GM12878 (cell line): ENCODE measurements at regions of chr16 and their contacts with region 1.

Region 1: DNA sequence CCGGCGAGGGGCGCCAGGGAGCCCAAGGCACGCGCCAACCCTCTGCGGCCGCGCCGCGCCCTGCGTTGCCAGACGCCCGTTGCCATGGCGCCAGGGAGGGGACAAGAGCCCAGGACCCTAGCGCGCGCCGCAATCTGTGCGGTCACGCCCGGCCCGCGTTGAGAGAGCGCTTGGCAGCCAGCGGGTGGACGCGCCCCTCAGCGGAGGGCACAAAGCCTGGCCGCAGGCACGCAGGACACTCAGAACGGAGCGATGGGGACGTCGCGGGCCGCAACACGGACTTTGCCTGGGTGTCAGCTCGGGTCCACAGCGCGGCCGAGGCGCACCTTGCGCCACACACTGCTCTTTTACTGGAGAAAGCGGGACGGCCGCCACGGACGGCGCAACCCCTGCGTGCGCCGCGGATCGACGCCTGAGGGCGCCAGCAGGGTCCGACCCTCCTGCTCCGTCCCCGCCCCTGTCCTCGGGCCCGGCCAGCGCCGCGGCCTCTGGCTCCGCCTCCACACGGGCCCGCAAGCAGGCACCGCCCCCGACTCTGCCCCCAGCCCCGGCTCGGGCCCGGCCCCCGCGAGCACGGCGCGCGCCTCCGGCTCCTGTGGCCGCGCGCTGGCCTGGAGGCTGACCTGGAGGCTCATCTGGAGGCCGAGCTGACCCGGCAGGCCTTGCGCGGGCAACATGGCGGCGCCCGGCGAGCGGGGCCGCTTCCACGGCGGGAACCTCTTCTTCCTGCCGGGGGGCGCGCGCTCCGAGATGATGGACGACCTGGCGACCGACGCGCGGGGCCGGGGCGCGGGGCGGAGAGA is at the start of gene GFER:
- DNase-seq: peak; percentile 43
- ATAC-seq: peak; percentile 91
- H3K4me3 ChIP-seq: peak within 1 kb of the TSS; percentile 87
- H3K27ac ChIP-seq: no peak within 1 kb of the TSS
- H3K4me1 ChIP-seq: peaks cover 28% of the 10 kb centered on the region
- H3K27me3 ChIP-seq: 0 out of 4 replicates have a peak, but pooled peaks cover 0 to 5% of the 10 kb centered on the region in 2 experiments
- CTCF ChIP-seq: peak in 2 of 3 experiments; percentile 48 to 53; a peak in 3 of 6 replicates
- EP300 ChIP-seq: no peak
- POLR2A ChIP-seq: peak; percentile 87
- RAD21 ChIP-seq: no peak
- polyA plus RNA-seq, gene GFER: 2.4 to 9.2 TPM

Region 2: GRCh38 chr16:1964506-1965395 is 19.0 kb before region 1 on chr16 and contains the start of gene RPS2:
- CTCF ChIA-PET with region 1: interaction called, 5 read pairs
- POLR2A ChIA-PET with region 1: interaction called, 25 read pairs
- RAD21 ChIA-PET with region 1: interaction called, 7 read pairs
- SMC1A ChIA-PET with region 1: interaction called, 7 read pairs
- in situ Hi-C with region 1: no loop called
- intact Hi-C with region 1: no loop called
- DNase-seq: peak; percentile 83
- ATAC-seq: peak; percentile 80
- H3K4me3 ChIP-seq: peak within 1 kb of the TSS; percentile 98
- H3K27ac ChIP-seq: peak within 1 kb of the TSS; percentile 90
- H3K4me1 ChIP-seq: peaks cover 14% of the 10 kb centered on the region
- H3K27me3 ChIP-seq: no peaks in the 10 kb centered on the region
- CTCF ChIP-seq: no peak
- EP300 ChIP-seq: no peak
- POLR2A ChIP-seq: peak; percentile 97
- RAD21 ChIP-seq: no peak
- polyA plus RNA-seq, gene RPS2: 1,295 to 3,629 TPM

Region 3: GRCh38 chr16:1971796-1972489 is 11.8 kb before region 1 on chr16 and contains the start of gene TBL3:
- CTCF ChIA-PET with region 1: interaction called, 4 read pairs
- POLR2A ChIA-PET with region 1: interaction called, 21 read pairs
- RAD21 ChIA-PET with region 1: interaction called, 6 read pairs
- SMC1A ChIA-PET with region 1: no interaction called
- in situ Hi-C with region 1: no loop called
- intact Hi-C with region 1: no loop called
- DNase-seq: peak; percentile 70
- ATAC-seq: peak; percentile 98
- H3K4me3 ChIP-seq: peak within 1 kb of the TSS; percentile 93
- H3K27ac ChIP-seq: peak within 1 kb of the TSS; percentile 89
- H3K4me1 ChIP-seq: peaks cover 12% of the 10 kb centered on the region
- H3K27me3 ChIP-seq: no peaks in the 10 kb centered on the region
- CTCF ChIP-seq: no peak
- EP300 ChIP-seq: peak in 1 of 2 experiments; percentile 49; a peak in 1 of 4 replicates
- POLR2A ChIP-seq: peak; percentile 97
- RAD21 ChIP-seq: no peak
- polyA plus RNA-seq, gene TBL3: 1.2 to 8.1 TPM